ENCODE measurements at regions of chr12 and their contacts with region 1.

Region 1: GRCh38 chr12:49264738-49265515 is at the start of gene TUBA1C:
- DNase-seq: peak; percentile 88
- ATAC-seq: peak; percentile 84
- H3K4me3 ChIP-seq: peak within 1 kb of the TSS; percentile 96 to 98 (median 96)
- H3K27ac ChIP-seq: peak within 1 kb of the TSS; percentile 95
- H3K4me1 ChIP-seq: peaks cover 45% of the 10 kb centered on the region
- H3K27me3 ChIP-seq: no peaks in the 10 kb centered on the region; a peak in 1 of 5 replicates
- CTCF ChIP-seq: no peak
- EP300 ChIP-seq: peak in 1 of 2 experiments; percentile 32; a peak in 1 of 4 replicates
- POLR2A ChIP-seq: peak; percentile 96 to 99
- RAD21 ChIP-seq: peak; percentile 64
- total RNA-seq, gene TUBA1C: 693 and 807 TPM in 2 replicates

Region 2: GRCh38 chr12:49069507-49070346 is 195.2 kb before region 1 on chr12 and contains the start of gene RHEBL1:
- CTCF ChIA-PET with region 1: no interaction called
- POLR2A ChIA-PET with region 1: interaction called, 12 read pairs
- in situ Hi-C with region 1: no loop called
- intact Hi-C with region 1: no loop called
- DNase-seq: peak; percentile 94
- ATAC-seq: peak; percentile 99
- H3K4me3 ChIP-seq: peak within 1 kb of the TSS; percentile 73 to 85 (median 80)
- H3K27ac ChIP-seq: peak within 1 kb of the TSS; percentile 54
- H3K4me1 ChIP-seq: peaks cover 24% of the 10 kb centered on the region
- H3K27me3 ChIP-seq: no peaks in the 10 kb centered on the region
- CTCF ChIP-seq: peak; percentile 56
- EP300 ChIP-seq: no peak
- POLR2A ChIP-seq: peak in 1 of 2 experiments; percentile 50; a peak in 2 of 4 replicates
- RAD21 ChIP-seq: 0 out of 2 replicates have a peak, but pooled peaks have one; percentile 11
- total RNA-seq, gene RHEBL1: 1.4 and 1.6 TPM in 2 replicates

Region 3: DNA sequence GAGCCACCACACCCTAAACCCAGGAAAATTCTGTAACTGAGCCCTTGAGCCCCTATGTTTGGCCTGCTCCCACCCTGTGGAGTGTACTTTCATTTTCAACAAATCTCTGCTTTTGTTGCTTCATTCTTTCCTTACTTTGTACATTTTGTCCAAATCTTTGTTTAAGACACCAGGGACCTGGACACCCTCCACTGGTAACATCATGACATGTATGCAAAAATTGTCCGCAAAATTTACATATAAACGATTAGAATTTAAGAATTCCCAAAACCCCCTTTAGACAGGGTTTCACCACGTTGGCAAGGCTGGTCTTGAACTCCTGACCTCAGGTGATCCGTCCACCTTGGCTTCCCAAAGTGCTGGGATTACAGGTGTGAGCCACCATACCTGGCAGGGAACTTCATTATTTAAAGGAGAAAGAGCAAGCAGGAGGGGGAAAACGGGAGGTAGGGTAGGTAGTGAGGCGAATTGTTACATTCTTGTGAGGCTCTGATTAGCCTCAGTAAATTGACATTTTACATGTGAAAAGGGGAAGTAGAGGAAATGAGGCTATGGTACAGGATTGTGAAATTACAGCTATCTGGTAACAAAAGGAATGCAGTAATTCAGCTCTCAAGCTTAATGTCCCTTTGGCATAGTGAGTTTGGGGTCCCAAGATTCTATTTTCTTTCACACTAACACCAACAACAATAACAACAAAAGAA is 103.7 kb before region 1 on chr12:
- CTCF ChIA-PET with region 1: no interaction called
- POLR2A ChIA-PET with region 1: no interaction called
- in situ Hi-C with region 1: no loop called
- intact Hi-C with region 1: no loop called
- DNase-seq: no peak
- ATAC-seq: no peak
- H3K4me3 ChIP-seq: no peak overlapping the region
- H3K27ac ChIP-seq: no peak overlapping the region
- H3K4me1 ChIP-seq: no peaks in the 10 kb centered on the region
- H3K27me3 ChIP-seq: no peaks in the 10 kb centered on the region; a peak in 2 of 5 replicates
- CTCF ChIP-seq: no peak
- EP300 ChIP-seq: no peak
- POLR2A ChIP-seq: no peak
- RAD21 ChIP-seq: no peak

Region 4: DNA sequence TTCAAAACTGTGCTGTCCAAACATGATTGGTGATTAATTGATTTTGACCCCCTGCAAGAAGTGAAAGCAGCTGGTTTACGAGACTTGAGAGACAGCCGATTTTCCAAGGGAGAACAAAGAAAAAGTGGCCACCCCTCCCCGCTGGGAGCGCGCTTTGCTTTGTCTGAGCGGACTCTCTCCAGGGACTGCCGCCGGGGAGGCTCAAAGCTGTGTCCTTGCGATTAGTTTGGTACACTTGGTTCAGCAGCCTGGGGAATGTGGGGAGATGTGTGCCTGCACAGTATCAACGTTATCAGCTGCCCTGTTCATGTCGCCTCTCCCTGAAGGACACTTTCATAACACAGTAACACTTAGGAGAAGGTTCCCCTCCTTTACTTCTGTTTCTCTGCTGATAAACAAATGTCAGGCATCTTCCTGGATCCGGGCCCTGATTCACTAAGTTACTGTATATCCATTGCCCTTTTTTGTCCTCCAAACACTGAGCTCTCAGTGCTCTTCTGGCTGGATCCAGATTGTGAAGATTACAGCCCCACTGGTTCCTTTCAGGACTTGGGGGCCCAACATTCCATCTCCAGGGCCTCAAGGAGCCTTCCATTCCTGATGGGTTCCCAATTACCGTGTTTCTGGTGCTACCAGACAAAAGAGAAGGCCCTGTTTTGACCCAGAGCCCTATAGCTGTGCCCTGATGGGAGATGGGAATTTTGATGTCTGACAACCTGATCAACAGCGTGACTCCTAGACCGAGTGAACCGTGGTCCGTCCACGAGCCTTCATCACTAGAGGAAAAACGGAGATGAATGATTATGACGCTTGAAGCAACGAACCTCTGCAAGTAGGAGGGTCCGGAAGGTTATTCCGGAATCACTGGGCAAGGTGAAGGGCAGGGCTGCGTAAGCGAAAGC is 31.7 kb before region 1 on chr12:
- CTCF ChIA-PET with region 1: no interaction called
- POLR2A ChIA-PET with region 1: interaction called, 9 read pairs
- in situ Hi-C with region 1: no loop called
- intact Hi-C with region 1: loop called (anchors 2 kb)
- DNase-seq: peak; percentile 30
- ATAC-seq: peak; percentile 78
- H3K4me3 ChIP-seq: peak overlapping the region in 2 of 3 experiments; percentile 33 to 54; a peak in 5 of 6 replicates
- H3K27ac ChIP-seq: no peak overlapping the region
- H3K4me1 ChIP-seq: peaks cover 27% of the 10 kb centered on the region
- H3K27me3 ChIP-seq: no peaks in the 10 kb centered on the region; a peak in 2 of 5 replicates
- CTCF ChIP-seq: peak; percentile 46
- EP300 ChIP-seq: no peak
- POLR2A ChIP-seq: no peak
- RAD21 ChIP-seq: no peak

Region 5: GRCh38 chr12:49296034-49296835 is 31.3 kb after region 1 on chr12:
- CTCF ChIA-PET with region 1: interaction called, 3 read pairs
- POLR2A ChIA-PET with region 1: interaction called, 11 read pairs
- in situ Hi-C with region 1: no loop called
- intact Hi-C with region 1: no loop called
- DNase-seq: peak; percentile 27
- ATAC-seq: peak; percentile 84
- H3K4me3 ChIP-seq: peak overlapping the region; percentile 37 to 71 (median 37); a peak in 5 of 6 replicates
- H3K27ac ChIP-seq: no peak overlapping the region
- H3K4me1 ChIP-seq: peaks cover 10% of the 10 kb centered on the region
- H3K27me3 ChIP-seq: peaks cover 16 to 66% of the 10 kb centered on the region in 2 experiments
- CTCF ChIP-seq: peak; percentile 84
- EP300 ChIP-seq: no peak
- POLR2A ChIP-seq: no peak
- RAD21 ChIP-seq: peak; percentile 40; the same call in 1 of the 2 replicates

Region 6: DNA sequence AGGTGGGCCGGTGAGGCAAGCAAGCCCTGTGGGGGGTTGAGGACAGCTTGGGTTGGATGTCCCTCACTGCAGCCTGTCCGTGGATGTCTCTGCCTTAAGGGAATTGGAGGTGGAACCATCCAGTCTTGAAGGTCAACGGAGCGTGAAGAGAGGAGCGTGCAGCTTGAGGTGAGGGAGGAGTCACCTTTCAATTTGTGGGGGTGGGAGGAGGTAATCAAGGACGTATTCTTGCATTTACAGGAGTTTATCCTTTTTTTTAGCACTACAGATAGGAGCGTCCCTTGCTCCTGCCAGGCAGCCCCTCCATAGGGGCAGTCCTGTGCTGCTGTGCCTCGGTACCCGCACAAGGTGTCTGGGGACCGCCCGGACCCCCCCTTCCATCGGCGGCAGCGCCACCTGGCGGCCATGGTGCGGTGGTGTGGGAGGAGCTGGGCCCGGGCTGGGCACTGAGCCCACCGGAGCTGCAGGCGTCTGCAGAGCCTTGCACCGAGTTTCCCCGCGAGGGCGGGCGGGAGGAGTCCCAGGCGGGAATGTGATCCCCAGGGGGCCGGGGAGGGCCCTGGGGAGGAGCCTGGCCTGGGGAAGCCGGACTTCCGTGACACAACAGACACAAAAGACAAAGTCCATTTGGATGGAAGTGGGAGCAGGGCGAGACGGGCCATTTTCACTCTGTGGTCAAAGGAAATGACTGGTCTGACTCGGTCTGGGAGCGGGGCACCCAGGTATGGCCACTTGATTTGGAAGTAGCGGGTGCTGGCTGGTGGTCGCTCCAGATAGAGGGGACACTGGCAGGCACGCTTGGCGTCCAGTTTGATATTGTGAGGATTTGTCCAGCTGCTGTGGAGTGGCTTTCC is 82.7 kb after region 1 on chr12:
- CTCF ChIA-PET with region 1: no interaction called
- POLR2A ChIA-PET with region 1: interaction called, 12 read pairs
- in situ Hi-C with region 1: no loop called
- intact Hi-C with region 1: no loop called
- DNase-seq: peak; percentile 95
- ATAC-seq: peak; percentile 92
- H3K4me3 ChIP-seq: peak overlapping the region; percentile 63 to 86 (median 84)
- H3K27ac ChIP-seq: peak overlapping the region; percentile 85
- H3K4me1 ChIP-seq: peaks cover 64% of the 10 kb centered on the region
- H3K27me3 ChIP-seq: peaks cover 13 to 40% of the 10 kb centered on the region in 2 experiments; a peak in 4 of 5 replicates
- CTCF ChIP-seq: peak; percentile 97
- EP300 ChIP-seq: peak in 1 of 2 experiments; percentile 56; a peak in 1 of 4 replicates
- POLR2A ChIP-seq: peak; percentile 98
- RAD21 ChIP-seq: peak; percentile 73

Region 7: DNA sequence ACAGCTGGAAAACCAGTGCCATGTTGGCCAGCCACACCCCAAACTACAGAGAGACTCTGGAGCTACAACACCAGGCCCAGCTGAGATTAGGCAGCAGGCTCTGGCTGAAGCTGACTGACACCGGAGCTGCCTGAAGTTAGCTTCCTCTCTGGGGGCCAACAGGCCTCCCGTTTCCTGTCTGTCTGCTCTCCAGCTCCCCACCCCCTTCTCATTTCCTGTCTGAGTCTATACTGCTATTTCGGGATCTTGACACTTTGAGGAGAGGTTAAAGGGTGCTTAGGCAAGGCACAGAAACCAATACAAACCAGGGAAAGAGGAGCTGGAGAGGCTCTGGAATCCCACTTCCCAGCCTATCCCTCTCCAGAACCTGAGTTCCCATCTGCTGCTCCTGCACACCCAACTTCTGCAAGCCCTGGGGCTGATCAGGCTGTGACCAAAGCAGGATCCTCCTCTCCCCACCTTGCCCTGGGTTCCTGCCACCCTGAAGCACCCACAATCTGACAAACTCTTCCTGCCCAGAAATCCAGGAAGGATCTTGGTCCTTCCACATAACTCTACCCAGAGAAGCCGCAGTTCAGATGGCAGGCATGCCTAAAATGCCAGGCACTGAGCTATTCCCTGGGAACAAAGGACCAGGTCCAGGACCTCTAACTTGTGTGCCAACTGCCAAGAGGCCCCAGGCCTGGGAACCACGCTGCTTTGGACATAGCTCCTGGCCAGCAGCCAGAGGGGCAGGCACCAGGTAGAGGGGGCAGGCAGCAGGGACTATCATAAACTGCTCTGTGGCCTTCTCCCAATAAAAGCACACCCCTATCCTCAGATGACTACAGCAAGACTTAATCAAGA is 398.3 kb after region 1 on chr12:
- CTCF ChIA-PET with region 1: no interaction called
- POLR2A ChIA-PET with region 1: no interaction called
- in situ Hi-C with region 1: no loop called
- intact Hi-C with region 1: no loop called
- DNase-seq: peak; percentile 14
- ATAC-seq: peak; percentile 70
- H3K4me3 ChIP-seq: no peak overlapping the region; a peak in 1 of 6 replicates
- H3K27ac ChIP-seq: no peak overlapping the region
- H3K4me1 ChIP-seq: peaks cover 15% of the 10 kb centered on the region
- H3K27me3 ChIP-seq: no peaks in the 10 kb centered on the region; a peak in 1 of 5 replicates
- CTCF ChIP-seq: no peak
- EP300 ChIP-seq: no peak
- POLR2A ChIP-seq: no peak
- RAD21 ChIP-seq: no peak

Measured in HepG2 (cell line).